ENCODE measurements at regions of chr4 and their contacts with region 1.

Region 1: GRCh38 chr4:182925298-182925738 is 8.1 kb upstream of the DCTD start:
- DNase-seq: peak; percentile 79 to 94 (median 87)
- H3K4me3 ChIP-seq: no peak overlapping the region
- H3K27ac ChIP-seq: no peak overlapping the region
- H3K4me1 ChIP-seq: no peaks in the 10 kb centered on the region
- H3K27me3 ChIP-seq: no peaks in the 10 kb centered on the region
- CTCF ChIP-seq: peak; percentile 57 to 80 (median 72)
- POLR2A ChIP-seq: no peak

Region 2: DNA sequence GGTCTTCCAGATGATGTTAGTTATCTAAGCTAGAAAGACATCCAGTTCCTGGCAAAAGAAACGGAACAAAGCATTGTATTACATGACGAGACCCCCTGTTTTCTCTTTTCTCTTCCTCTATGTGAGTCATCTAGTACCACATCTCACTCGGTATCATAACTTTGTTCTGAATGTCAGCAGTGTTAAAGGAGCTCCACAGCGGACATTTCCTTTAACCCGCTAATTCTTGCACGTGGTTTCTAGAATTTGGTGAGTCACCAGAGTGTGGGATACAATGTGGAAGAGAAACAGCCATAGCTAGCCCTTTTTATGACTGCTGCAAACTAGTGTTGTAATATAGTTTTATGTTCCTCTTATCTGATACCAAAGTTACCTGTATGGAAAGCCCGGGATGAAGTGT is 438.4 kb before region 1 on chr4:
- intact Hi-C with region 1: loop called in 1 of 2 experiments (anchors 10 kb)
- DNase-seq: no peak
- H3K4me3 ChIP-seq: no peak overlapping the region
- H3K27ac ChIP-seq: no peak overlapping the region
- H3K4me1 ChIP-seq: no peaks in the 10 kb centered on the region
- H3K27me3 ChIP-seq: no peaks in the 10 kb centered on the region
- CTCF ChIP-seq: no peak
- POLR2A ChIP-seq: no peak

Measured in adrenal gland (tissue), 19 donors.